Right lobe of liver (tissue), 6 donors: ENCODE measurements at regions of chr7 and their contacts with region 1.

Region 1: GRCh38 chr7:116809636-116810266 is 52.6 kb upstream of the CAPZA2 start:
- DNase-seq: no peak
- ATAC-seq: peak; percentile 70 to 83 (median 75)
- H3K4me3 ChIP-seq: peak overlapping the region in 1 of 3 donors; percentile 49
- H3K27ac ChIP-seq: peak overlapping the region; percentile 43 to 91 (median 91)
- H3K4me1 ChIP-seq: peaks cover 0 to 40% (median 14%) of the 10 kb centered on the region in 4 donors
- H3K27me3 ChIP-seq: no peaks in the 10 kb centered on the region
- CTCF ChIP-seq: peak; percentile 58 to 80 (median 68)
- POLR2A ChIP-seq: no peak

Region 2: DNA sequence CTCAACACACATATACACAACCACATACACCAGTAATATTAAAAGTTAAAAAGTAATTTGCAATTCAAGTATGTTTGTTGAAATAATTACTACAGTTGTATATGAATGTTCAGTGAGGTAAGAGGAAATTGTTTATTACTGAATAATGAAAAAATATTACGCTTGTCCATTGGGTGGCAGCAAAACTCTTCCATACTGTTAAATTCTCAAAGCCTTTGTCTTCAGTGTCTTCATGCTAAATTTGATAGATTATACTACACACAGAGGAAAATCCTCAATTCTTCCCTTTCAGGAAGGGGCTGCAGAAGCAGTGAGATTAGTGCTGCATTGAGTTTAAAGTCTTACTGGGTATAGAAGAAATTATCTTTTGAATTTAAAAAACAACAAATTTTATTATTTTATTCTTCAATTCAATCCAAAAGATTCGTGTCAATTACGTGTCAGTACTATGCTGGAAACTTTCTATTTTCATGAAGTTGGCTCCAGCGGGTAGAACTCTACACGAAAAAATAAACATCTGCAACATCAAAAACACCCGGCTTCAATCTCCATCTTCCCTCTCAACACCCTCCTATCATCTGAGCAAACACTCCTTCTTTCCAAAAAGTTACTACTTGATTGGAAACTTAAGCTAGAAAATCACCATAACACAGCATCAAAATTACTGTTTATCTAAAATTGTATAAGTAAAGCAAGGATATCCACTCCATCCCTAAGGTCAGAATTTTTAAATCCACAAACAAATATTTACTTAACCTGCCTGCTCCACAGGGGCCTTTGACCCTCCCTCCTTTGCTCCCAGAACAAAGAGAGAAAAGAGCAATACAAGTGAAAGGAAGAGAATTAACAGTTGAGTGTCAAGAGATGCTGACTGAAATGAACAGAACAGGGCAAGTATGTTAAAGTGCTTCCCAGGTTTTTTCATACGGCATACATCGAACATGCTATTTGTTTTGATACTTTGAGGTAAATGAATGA is 636.4 kb before region 1 on chr7:
- intact Hi-C with region 1: loop called in 1 of 2 experiments (anchors 10 kb)
- DNase-seq: no peak
- ATAC-seq: peak; percentile 75 to 83 (median 77)
- H3K4me3 ChIP-seq: no peak overlapping the region
- H3K27ac ChIP-seq: no peak overlapping the region
- H3K4me1 ChIP-seq: peaks cover 0 to 29% (median 0%) of the 10 kb centered on the region in 4 donors
- H3K27me3 ChIP-seq: no peaks in the 10 kb centered on the region
- CTCF ChIP-seq: peak; percentile 49 to 75 (median 64)
- POLR2A ChIP-seq: no peak

Region 3: DNA sequence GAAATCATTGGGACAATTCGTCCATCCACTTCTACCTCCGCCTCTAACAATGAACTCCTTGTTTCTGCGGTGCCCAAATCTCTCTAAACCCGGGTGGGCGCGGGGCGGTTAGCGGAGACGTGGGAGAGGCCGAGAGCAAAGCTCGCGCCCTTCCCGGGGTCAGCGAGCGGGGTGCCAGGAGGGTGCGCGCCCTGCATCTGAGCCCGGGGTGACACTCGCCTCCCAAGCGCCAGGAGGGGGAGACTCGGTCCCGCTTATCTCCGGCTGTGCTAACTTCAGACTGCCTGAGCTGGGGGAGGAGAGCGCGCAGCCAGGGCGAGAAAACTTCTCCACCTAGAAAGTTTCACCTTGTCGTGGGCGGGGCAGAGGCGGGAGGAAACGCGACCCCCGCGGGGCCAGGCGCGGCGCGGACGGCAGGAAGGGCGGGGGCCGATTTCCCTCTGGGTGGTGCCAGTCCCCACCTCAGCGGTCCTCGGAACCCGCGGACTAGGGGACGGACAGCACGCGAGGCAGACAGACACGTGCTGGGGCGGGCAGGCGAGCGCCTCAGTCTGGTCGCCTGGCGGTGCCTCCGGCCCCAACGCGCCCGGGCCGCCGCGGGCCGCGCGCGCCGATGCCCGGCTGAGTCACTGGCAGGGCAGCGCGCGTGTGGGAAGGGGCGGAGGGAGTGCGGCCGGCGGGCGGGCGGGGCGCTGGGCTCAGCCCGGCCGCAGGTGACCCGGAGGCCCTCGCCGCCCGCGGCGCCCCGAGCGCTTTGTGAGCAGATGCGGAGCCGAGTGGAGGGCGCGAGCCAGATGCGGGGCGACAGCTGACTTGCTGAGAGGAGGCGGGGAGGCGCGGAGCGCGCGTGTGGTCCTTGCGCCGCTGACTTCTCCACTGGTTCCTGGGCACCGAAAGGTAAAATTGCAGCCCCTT is 137.8 kb before region 1 on chr7 and contains the start of gene MET:
- intact Hi-C with region 1: loop called (anchors 10 kb)
- DNase-seq: peak; percentile 88 to 92 (median 92)
- ATAC-seq: peak; percentile 89 to 97 (median 92)
- H3K4me3 ChIP-seq: peak within 1 kb of the TSS; percentile 53 to 73 (median 65)
- H3K27ac ChIP-seq: peak within 1 kb of the TSS; percentile 91 to 97 (median 93)
- H3K4me1 ChIP-seq: peaks cover 0 to 20% (median 7%) of the 10 kb centered on the region in 4 donors
- H3K27me3 ChIP-seq: no peaks in the 10 kb centered on the region
- CTCF ChIP-seq: peak; percentile 52 to 77 (median 69)
- POLR2A ChIP-seq: peak; percentile 81
- total RNA-seq, gene MET: 32.9 to 45.2 (median 37.2) TPM

Region 4: GRCh38 chr7:117251687-117252086 is 441.9 kb after region 1 on chr7:
- intact Hi-C with region 1: no loop called
- DNase-seq: no peak
- ATAC-seq: no peak
- H3K4me3 ChIP-seq: no peak overlapping the region
- H3K27ac ChIP-seq: no peak overlapping the region
- H3K4me1 ChIP-seq: no peaks in the 10 kb centered on the region
- H3K27me3 ChIP-seq: no peaks in the 10 kb centered on the region
- CTCF ChIP-seq: no peak
- POLR2A ChIP-seq: no peak